ENCODE measurements at regions of chr19 and their contacts with region 1.

Region 1: GRCh38 chr19:2867025-2867991 is at the start of gene ZNF556:
- DNase-seq: peak; percentile 2 to 76
- H3K4me3 ChIP-seq: no peak within 1 kb of the TSS
- H3K27ac ChIP-seq: no peak within 1 kb of the TSS
- H3K4me1 ChIP-seq: no peaks in the 10 kb centered on the region
- H3K27me3 ChIP-seq: no peaks in the 10 kb centered on the region; the same call in 1 of the 2 replicates
- CTCF ChIP-seq: no peak
- total RNA-seq, gene ZNF556: not detected in 2 replicates

Region 2: GRCh38 chr19:2887391-2887914 is 20.1 kb after region 1 on chr19:
- CTCF ChIA-PET with region 1: interaction called, 12 read pairs
- POLR2A ChIA-PET with region 1: no interaction called
- intact Hi-C with region 1: no loop called
- DNase-seq: peak in 1 of 2 experiments; percentile 58
- H3K4me3 ChIP-seq: no peak overlapping the region
- H3K27ac ChIP-seq: no peak overlapping the region
- H3K4me1 ChIP-seq: no peaks in the 10 kb centered on the region
- H3K27me3 ChIP-seq: peaks cover 29% of the 10 kb centered on the region
- CTCF ChIP-seq: peak; percentile 61

Measured in PC-9 (cell line).